ENCODE measurements at regions of chr1 and their contacts with region 1.

Region 1: DNA sequence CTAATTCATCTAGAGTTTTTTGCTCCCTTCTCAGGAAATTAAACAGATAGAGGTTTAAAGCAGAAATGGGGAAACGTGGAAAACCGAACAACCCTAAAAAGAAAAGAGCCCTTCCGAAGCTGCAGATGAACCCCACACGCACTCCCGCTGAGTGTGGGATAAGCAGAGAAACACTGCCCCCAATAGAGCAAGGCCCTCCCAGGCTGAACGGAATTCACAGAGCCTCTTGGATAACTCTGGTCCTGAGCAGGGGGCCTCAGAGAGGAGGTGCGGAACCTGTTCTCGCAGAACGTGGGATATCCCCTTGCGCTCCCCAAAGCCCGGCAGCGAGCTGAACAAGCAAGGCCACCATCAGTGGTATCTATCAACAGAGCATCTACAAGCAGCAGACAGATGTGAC is 44.9 kb downstream of the SSBP3 start:
- DNase-seq: peak in 7 of 10 donors; percentile 28 to 92 (median 63)

Region 2: GRCh38 chr1:54273092-54273794 is 88.1 kb before region 1 on chr1:
- intact Hi-C with region 1: loop called (anchors 2 kb)
- DNase-seq: peak; percentile 62 to 97 (median 76)

Region 3: GRCh38 chr1:54397090-54397591 is 35.8 kb after region 1 on chr1:
- intact Hi-C with region 1: loop called (anchors 5 kb)
- DNase-seq: peak in 3 of 10 donors; percentile 34 to 75 (median 63)

Region 4: GRCh38 chr1:55007625-55008024 is 646.3 kb after region 1 on chr1:
- intact Hi-C with region 1: no loop called
- DNase-seq: peak in 1 of 10 donors; percentile 22